Heart left ventricle (tissue), 16 donors: ENCODE measurements at regions of chr3 and their contacts with region 1.

Region 1: GRCh38 chr3:184379358-184380188 is at the start of gene CHRD:
- DNase-seq: peak in 2 of 5 donors; percentile 45 to 61
- ATAC-seq: peak; percentile 32 to 63 (median 58)
- H3K4me3 ChIP-seq: peak within 1 kb of the TSS; percentile 28 to 74 (median 54)
- H3K27ac ChIP-seq: peak within 1 kb of the TSS; percentile 47 to 86 (median 73)
- H3K4me1 ChIP-seq: peaks cover 0 to 42% (median 27%) of the 10 kb centered on the region in 12 donors
- H3K27me3 ChIP-seq: peaks cover 0 to 60% (median 31%) of the 10 kb centered on the region in 9 donors
- CTCF ChIP-seq: no peak
- POLR2A ChIP-seq: no peak
- total RNA-seq, gene CHRD: 2.0 to 7.4 (median 4.8) TPM

Region 2: GRCh38 chr3:184298759-184299496 is 80.6 kb before region 1 on chr3 and contains the start of gene PSMD2:
- intact Hi-C with region 1: no loop called
- DNase-seq: peak; percentile 97 to 99 (median 98)
- ATAC-seq: peak; percentile 99 to 100 (median 99)
- H3K4me3 ChIP-seq: peak within 1 kb of the TSS; percentile 66 to 98 (median 92)
- H3K27ac ChIP-seq: peak within 1 kb of the TSS; percentile 30 to 90 (median 84)
- H3K4me1 ChIP-seq: peaks cover 0 to 19% (median 13%) of the 10 kb centered on the region in 12 donors
- H3K27me3 ChIP-seq: no peaks in the 10 kb centered on the region
- CTCF ChIP-seq: no peak
- POLR2A ChIP-seq: peak; percentile 25 to 76
- total RNA-seq, gene PSMD2: 198 to 314 (median 232) TPM

Region 3: GRCh38 chr3:184525337-184526087 is 145.9 kb after region 1 on chr3:
- intact Hi-C with region 1: loop called in 1 of 10 experiments (anchors 5 kb)
- DNase-seq: no peak
- ATAC-seq: peak in 3 of 4 donors; percentile 50 to 71 (median 53)
- H3K4me3 ChIP-seq: peak overlapping the region; percentile 18 to 68 (median 58)
- H3K27ac ChIP-seq: peak overlapping the region in 11 of 12 donors; percentile 16 to 92 (median 81)
- H3K4me1 ChIP-seq: peaks cover 0 to 26% (median 12%) of the 10 kb centered on the region in 12 donors
- H3K27me3 ChIP-seq: peaks cover 0 to 60% (median 35%) of the 10 kb centered on the region in 9 donors
- CTCF ChIP-seq: no peak
- POLR2A ChIP-seq: no peak